HCT116 (cell line): ENCODE measurements at regions of chr14 and their contacts with region 1.

Region 1: GRCh38 chr14:56474419-56475022 is 105.1 kb upstream of the TMEM260 start:
- DNase-seq: peak; percentile 23
- ATAC-seq: peak; percentile 76
- H3K4me3 ChIP-seq: no peak overlapping the region
- H3K27ac ChIP-seq: no peak overlapping the region
- H3K4me1 ChIP-seq: no peaks in the 10 kb centered on the region
- H3K27me3 ChIP-seq: 0 out of 2 replicates have a peak, but pooled peaks cover 7% of the 10 kb centered on the region
- CTCF ChIP-seq: peak; percentile 58 to 72 (median 71); a peak in 5 of 6 replicates
- POLR2A ChIP-seq: no peak
- RAD21 ChIP-seq: peak; percentile 83

Region 2: DNA sequence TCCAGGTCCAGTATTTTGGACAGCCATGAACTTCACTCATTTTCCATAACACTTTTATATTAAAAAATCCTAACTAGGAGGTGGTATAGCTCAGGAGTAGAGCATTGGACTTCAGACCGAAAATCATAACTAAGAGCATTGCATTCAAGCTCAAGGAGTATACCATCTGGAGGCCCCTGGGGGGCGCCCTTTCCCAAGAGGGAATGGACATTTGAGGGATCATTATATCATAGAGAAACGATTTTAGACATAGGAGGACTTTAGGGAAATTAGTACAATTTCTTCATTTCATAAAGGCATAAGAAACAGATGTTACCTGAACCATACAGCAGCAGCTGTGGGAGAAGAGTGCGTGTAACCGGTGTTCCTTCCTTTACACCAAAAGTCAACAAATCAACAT is 1057.7 kb before region 1 on chr14:
- CTCF ChIA-PET with region 1: interaction called, 10 read pairs
- POLR2A ChIA-PET with region 1: no interaction called
- RAD21 ChIA-PET with region 1: no interaction called
- intact Hi-C with region 1: no loop called
- DNase-seq: peak; percentile 53
- ATAC-seq: peak; percentile 88
- H3K4me3 ChIP-seq: no peak overlapping the region
- H3K27ac ChIP-seq: no peak overlapping the region
- H3K4me1 ChIP-seq: peaks cover 0 to 9% of the 10 kb centered on the region in 2 experiments; a peak in 2 of 4 replicates
- H3K27me3 ChIP-seq: no peaks in the 10 kb centered on the region
- CTCF ChIP-seq: peak; percentile 51 to 93 (median 88); a peak in 5 of 6 replicates
- POLR2A ChIP-seq: no peak
- RAD21 ChIP-seq: peak; percentile 73

Region 3: GRCh38 chr14:55446218-55446654 is 1028.3 kb before region 1 on chr14:
- CTCF ChIA-PET with region 1: interaction called, 16 read pairs
- POLR2A ChIA-PET with region 1: no interaction called
- RAD21 ChIA-PET with region 1: interaction called in 1 of 2 experiments, 3 read pairs
- intact Hi-C with region 1: no loop called
- DNase-seq: peak; percentile 76
- ATAC-seq: peak; percentile 29
- H3K4me3 ChIP-seq: peak overlapping the region in 1 of 2 experiments; percentile 34; a peak in 2 of 4 replicates
- H3K27ac ChIP-seq: peak overlapping the region; percentile 99
- H3K4me1 ChIP-seq: peaks cover 47 to 56% of the 10 kb centered on the region in 2 experiments
- H3K27me3 ChIP-seq: no peaks in the 10 kb centered on the region
- CTCF ChIP-seq: peak; percentile 62 to 86 (median 69); a peak in 5 of 6 replicates
- POLR2A ChIP-seq: no peak
- RAD21 ChIP-seq: peak; percentile 82

Region 4: DNA sequence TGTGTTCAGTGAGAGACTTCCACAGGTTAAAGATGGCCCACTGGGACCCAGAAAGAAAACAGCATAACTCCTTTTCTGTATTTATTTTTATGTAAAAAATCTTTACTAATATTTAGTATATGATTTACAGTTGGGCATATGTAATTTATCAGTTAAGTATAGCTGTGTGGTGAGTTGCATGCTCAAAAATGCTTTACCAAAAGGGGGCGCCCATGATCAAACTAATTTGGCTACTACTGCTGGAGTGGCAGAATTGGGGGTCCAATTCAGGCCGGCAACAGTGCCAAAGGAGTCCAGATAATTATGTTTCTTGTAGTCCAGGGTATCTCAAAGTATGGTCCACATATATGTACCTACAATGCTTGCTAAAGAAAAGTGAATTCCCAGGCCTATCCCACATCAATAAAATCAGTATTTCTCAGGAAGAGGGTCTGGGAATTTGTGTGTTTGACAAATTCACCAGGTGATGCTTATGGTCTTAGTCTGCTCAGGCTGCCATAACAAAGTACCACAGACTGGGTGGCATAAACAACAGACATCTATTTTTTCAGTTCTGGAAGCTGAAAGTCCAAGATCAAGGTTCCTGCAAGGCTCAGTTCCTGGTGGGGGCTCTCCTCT is 742.5 kb before region 1 on chr14:
- CTCF ChIA-PET with region 1: interaction called, 15 read pairs
- POLR2A ChIA-PET with region 1: no interaction called
- RAD21 ChIA-PET with region 1: no interaction called
- intact Hi-C with region 1: no loop called
- DNase-seq: peak; percentile 12
- ATAC-seq: peak; percentile 65
- H3K4me3 ChIP-seq: no peak overlapping the region
- H3K27ac ChIP-seq: no peak overlapping the region
- H3K4me1 ChIP-seq: peaks cover 0 to 11% of the 10 kb centered on the region in 2 experiments; a peak in 2 of 4 replicates
- H3K27me3 ChIP-seq: no peaks in the 10 kb centered on the region
- CTCF ChIP-seq: peak; percentile 34 to 67 (median 57); a peak in 5 of 6 replicates
- POLR2A ChIP-seq: no peak
- RAD21 ChIP-seq: peak; percentile 69

Region 5: DNA sequence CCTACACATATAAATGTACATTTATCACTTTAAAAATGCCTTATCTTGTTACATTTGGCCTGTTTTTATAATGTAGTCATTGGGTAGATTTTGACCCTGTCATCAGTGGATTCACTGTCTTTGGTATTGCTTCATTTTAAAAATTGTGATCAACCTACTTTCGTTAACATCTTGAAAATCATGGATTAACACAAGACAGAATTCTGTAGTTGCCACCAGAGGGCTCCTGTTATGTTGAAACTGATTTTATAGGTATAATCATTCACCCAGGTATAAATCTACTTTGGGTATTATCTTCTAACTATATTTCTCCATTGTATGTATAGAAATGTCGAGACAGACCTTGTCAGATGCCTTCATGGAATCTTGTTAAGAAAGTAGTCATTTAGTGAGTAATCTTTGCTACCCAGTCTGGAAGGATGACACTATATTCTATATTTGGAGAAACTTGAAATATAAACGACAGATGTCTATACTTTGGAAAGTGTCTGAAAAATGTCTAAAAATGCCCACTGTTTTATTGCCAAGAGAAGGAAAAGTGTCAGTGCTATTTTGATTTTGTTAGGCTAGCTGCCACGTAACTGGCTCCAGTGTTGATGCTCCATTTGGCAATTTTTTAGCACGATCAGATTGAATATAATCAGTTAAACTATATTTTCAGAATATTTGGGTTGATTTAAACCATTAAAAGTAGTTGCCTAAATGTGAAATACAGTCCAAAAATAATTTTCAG is 226.9 kb before region 1 on chr14:
- CTCF ChIA-PET with region 1: no interaction called
- POLR2A ChIA-PET with region 1: no interaction called
- RAD21 ChIA-PET with region 1: no interaction called
- intact Hi-C with region 1: loop called (anchors 1 kb)
- DNase-seq: peak; percentile 4
- ATAC-seq: no peak
- H3K4me3 ChIP-seq: no peak overlapping the region
- H3K27ac ChIP-seq: no peak overlapping the region
- H3K4me1 ChIP-seq: no peaks in the 10 kb centered on the region
- H3K27me3 ChIP-seq: peaks cover 22% of the 10 kb centered on the region; the same call in 1 of the 2 replicates
- CTCF ChIP-seq: peak; percentile 29 to 53 (median 30); a peak in 4 of 6 replicates
- POLR2A ChIP-seq: no peak
- RAD21 ChIP-seq: peak; percentile 45; the same call in 1 of the 2 replicates

Region 6: GRCh38 chr14:56561606-56562005 is 87.1 kb after region 1 on chr14:
- CTCF ChIA-PET with region 1: no interaction called
- POLR2A ChIA-PET with region 1: no interaction called
- RAD21 ChIA-PET with region 1: no interaction called
- intact Hi-C with region 1: no loop called
- DNase-seq: no peak
- ATAC-seq: no peak
- H3K4me3 ChIP-seq: no peak overlapping the region
- H3K27ac ChIP-seq: no peak overlapping the region
- H3K4me1 ChIP-seq: no peaks in the 10 kb centered on the region
- H3K27me3 ChIP-seq: 0 out of 2 replicates have a peak, but pooled peaks cover 5% of the 10 kb centered on the region
- CTCF ChIP-seq: no peak
- POLR2A ChIP-seq: no peak
- RAD21 ChIP-seq: no peak